ENCODE measurements at regions of chr19 and their contacts with region 1.

Region 1: GRCh38 chr19:18007044-18007916 is 690 bp upstream of the ARRDC2 start:
- DNase-seq: peak; percentile 73 to 87 (median 74)
- H3K4me3 ChIP-seq: peak overlapping the region; percentile 70
- H3K4me3 Mint-ChIP-seq: peak overlapping the region; percentile 84 to 94 (median 88)
- H3K27ac ChIP-seq: peak overlapping the region; percentile 38
- H3K27ac Mint-ChIP-seq: peak overlapping the region; percentile 90 to 99 (median 97)
- H3K4me1 ChIP-seq: peaks cover 43% of the 10 kb centered on the region
- H3K4me1 Mint-ChIP-seq: peaks cover 17 to 39% (median 35%) of the 10 kb centered on the region in 3 donors
- H3K27me3 ChIP-seq: no peaks in the 10 kb centered on the region
- H3K27me3 Mint-ChIP-seq: peaks cover 0 to 2% of the 10 kb centered on the region in 2 donors

Region 2: DNA sequence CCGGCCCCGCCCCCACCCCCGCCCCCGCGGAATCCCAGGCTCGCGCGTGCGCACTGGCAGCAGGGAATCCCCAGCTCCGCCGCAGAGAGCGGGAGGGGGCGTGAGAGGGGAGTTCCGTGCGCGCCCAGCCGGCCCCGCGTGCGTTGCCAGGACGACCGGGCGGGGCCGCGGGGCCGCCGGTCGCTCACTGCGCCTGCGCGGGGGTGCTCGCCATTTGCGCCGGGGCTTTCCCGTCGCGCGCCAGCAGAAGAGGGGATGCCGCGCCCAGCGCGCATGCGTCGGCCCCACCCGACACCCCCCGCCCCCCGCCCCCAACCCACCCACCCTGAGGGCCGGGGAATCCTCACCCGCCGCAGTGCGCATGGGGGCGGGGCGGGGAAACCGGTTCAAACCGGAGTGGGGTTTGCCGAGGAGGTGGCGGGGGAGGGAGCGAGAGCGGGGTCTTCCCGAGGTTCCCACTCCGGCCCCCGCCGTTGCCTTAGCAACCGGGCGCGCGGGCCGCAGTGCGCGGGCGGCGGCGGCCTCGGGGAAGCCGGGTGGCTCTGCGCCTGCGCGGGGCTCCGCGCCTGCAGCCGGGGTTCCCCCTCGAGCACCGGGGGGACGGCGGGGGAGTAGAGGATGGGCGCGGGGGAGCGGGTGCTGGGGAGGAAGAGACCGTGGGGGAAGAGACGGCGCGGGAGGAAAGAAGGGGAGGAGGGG is 59.3 kb before region 1 on chr19:
- CTCF ChIA-PET with region 1: no interaction called
- POLR2A ChIA-PET with region 1: no interaction called
- DNase-seq: peak; percentile 93 to 97 (median 95)
- H3K4me3 ChIP-seq: no peak overlapping the region
- H3K4me3 Mint-ChIP-seq: peak overlapping the region; percentile 66 to 92 (median 82)
- H3K27ac ChIP-seq: peak overlapping the region; percentile 51
- H3K27ac Mint-ChIP-seq: peak overlapping the region in 6 of 8 donors; percentile 21 to 100 (median 92)
- H3K4me1 ChIP-seq: peaks cover 50% of the 10 kb centered on the region
- H3K4me1 Mint-ChIP-seq: peaks cover 41 to 54% (median 47%) of the 10 kb centered on the region in 3 donors
- H3K27me3 ChIP-seq: peaks cover 33% of the 10 kb centered on the region
- H3K27me3 Mint-ChIP-seq: peaks cover 30 to 36% of the 10 kb centered on the region in 2 donors

Region 3: GRCh38 chr19:17985037-17985818 is 22.1 kb before region 1 on chr19:
- CTCF ChIA-PET with region 1: no interaction called
- POLR2A ChIA-PET with region 1: no interaction called
- DNase-seq: no peak
- H3K4me3 ChIP-seq: no peak overlapping the region
- H3K4me3 Mint-ChIP-seq: no peak overlapping the region
- H3K27ac ChIP-seq: no peak overlapping the region
- H3K27ac Mint-ChIP-seq: no peak overlapping the region
- H3K4me1 ChIP-seq: no peaks in the 10 kb centered on the region
- H3K4me1 Mint-ChIP-seq: no peaks in the 10 kb centered on the region
- H3K27me3 ChIP-seq: no peaks in the 10 kb centered on the region
- H3K27me3 Mint-ChIP-seq: peaks cover 11 to 15% of the 10 kb centered on the region in 2 donors

Region 4: DNA sequence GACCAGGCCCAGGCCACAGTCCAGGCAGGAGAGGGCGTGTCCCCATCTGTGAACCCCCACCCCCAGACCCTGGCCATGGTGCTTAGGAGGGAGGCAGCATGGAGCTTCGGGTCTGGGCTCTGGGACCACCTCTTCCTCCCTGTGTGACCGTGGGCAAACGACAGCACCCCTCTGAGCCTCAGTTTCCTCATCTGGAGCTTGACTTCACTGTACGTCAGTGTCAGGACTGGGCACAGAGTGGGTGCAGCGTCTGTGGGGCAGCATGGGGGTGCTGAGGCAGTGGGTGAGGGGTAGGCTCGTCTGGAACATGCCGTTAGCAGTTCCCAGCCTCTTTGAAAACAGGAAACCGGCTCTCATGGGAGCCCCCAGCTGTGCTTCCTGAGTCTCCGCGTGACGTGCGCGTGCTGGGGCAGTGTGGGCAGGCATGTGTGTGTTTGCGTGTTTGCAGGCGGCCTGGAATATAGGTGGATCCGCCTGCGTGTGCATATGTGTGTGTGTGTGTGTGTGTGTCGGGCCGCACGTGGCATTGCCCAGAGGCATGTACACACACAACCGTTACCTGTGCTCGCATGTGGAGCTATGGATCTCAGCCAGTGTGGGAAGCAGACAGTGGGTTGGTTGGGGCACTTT is 16.5 kb after region 1 on chr19:
- CTCF ChIA-PET with region 1: interaction called, 14 read pairs
- POLR2A ChIA-PET with region 1: interaction called, 9 read pairs
- DNase-seq: peak; percentile 31 to 93 (median 67)
- H3K4me3 ChIP-seq: peak overlapping the region; percentile 43
- H3K4me3 Mint-ChIP-seq: peak overlapping the region in 6 of 7 donors; percentile 34 to 72 (median 59)
- H3K27ac ChIP-seq: no peak overlapping the region
- H3K27ac Mint-ChIP-seq: peak overlapping the region; percentile 65 to 93 (median 90)
- H3K4me1 ChIP-seq: peaks cover 40% of the 10 kb centered on the region
- H3K4me1 Mint-ChIP-seq: peaks cover 38 to 53% (median 43%) of the 10 kb centered on the region in 3 donors
- H3K27me3 ChIP-seq: no peaks in the 10 kb centered on the region
- H3K27me3 Mint-ChIP-seq: peaks cover 0 to 1% of the 10 kb centered on the region in 2 donors

Region 5: DNA sequence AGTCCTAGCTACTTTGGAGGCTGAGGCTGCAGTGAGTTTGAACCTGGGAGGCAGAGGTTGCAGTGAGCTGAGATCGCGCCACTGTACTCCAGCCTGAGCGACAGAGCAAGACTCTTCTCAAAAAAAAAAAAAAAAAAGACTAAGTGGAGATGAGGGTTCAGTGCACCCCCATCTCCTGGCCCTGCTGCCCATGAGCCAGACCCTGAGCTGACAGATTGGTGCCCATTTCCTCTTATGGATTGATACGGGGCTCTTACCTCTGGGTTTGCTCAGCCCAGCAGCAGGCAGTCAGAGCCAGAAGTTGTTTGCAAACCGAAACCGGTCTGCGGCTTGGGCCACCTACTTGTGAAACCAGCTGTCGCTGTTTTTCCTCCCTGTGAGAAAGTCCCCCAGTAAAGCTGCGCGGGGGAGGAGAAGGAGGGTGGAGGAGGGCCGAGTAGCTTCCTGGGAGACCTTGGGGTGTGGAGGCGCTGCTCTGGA is 37.6 kb after region 1 on chr19:
- CTCF ChIA-PET with region 1: interaction called, 17 read pairs
- POLR2A ChIA-PET with region 1: interaction called, 18 read pairs
- DNase-seq: peak; percentile 71 to 91 (median 81)
- H3K4me3 ChIP-seq: peak overlapping the region; percentile 68
- H3K4me3 Mint-ChIP-seq: peak overlapping the region; percentile 13 to 91 (median 84)
- H3K27ac ChIP-seq: peak overlapping the region; percentile 64
- H3K27ac Mint-ChIP-seq: peak overlapping the region; percentile 84 to 97 (median 93)
- H3K4me1 ChIP-seq: peaks cover 35% of the 10 kb centered on the region
- H3K4me1 Mint-ChIP-seq: peaks cover 31 to 47% (median 44%) of the 10 kb centered on the region in 3 donors
- H3K27me3 ChIP-seq: no peaks in the 10 kb centered on the region
- H3K27me3 Mint-ChIP-seq: no peaks in the 10 kb centered on the region

Region 6: GRCh38 chr19:18109733-18110595 is 102.7 kb after region 1 on chr19:
- CTCF ChIA-PET with region 1: interaction called, 13 read pairs
- POLR2A ChIA-PET with region 1: interaction called, 3 read pairs
- DNase-seq: peak; percentile 31 to 68 (median 46)
- H3K4me3 ChIP-seq: peak overlapping the region; percentile 61
- H3K4me3 Mint-ChIP-seq: peak overlapping the region; percentile 73 to 93 (median 86)
- H3K27ac ChIP-seq: peak overlapping the region; percentile 51
- H3K27ac Mint-ChIP-seq: peak overlapping the region in 5 of 8 donors; percentile 59 to 92 (median 89)
- H3K4me1 ChIP-seq: peaks cover 13% of the 10 kb centered on the region
- H3K4me1 Mint-ChIP-seq: peaks cover 16 to 30% (median 18%) of the 10 kb centered on the region in 3 donors
- H3K27me3 ChIP-seq: no peaks in the 10 kb centered on the region
- H3K27me3 Mint-ChIP-seq: no peaks in the 10 kb centered on the region

Region 7: DNA sequence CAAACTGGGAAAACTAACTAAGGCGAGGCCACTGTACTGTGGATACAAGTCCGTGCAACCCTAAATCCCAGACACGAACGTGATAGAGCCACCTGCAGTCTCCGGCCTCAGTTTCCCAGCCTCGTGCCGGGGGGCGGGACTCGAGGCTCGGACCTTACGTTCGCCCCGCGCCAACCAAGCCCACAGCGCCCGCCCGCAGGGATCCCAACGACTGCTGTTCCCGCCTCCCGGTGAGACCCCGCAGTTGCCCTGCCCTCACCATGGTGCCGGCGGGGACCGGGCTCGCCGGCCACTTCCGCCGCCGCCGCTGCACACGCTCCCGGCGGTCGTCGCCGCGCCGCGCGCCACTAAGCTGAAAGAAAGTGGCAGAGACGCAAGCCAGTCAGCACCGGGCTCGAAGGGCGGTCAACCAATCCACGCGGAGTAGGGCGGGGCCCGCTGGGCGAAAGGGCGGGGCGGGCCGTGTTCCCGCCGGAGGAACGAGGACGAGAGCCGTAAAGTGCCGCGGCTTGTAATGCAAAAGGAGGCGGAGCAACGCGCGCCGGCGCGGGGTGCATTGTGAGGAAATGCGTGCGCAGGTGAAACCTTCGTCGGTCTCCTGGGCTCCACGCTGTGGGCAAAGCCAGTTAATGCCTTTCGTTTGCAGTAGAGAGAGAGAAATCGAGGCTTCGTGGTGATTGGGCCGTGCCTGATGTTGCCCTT is 315.6 kb after region 1 on chr19 and contains the start of gene LSM4:
- CTCF ChIA-PET with region 1: no interaction called
- POLR2A ChIA-PET with region 1: no interaction called
- DNase-seq: peak; percentile 99 to 100 (median 99)
- H3K4me3 ChIP-seq: peak within 1 kb of the TSS; percentile 88
- H3K4me3 Mint-ChIP-seq: peak within 1 kb of the TSS; percentile 78 to 91 (median 83)
- H3K27ac ChIP-seq: peak within 1 kb of the TSS; percentile 91
- H3K27ac Mint-ChIP-seq: peak within 1 kb of the TSS; percentile 89 to 98 (median 98)
- H3K4me1 ChIP-seq: peaks cover 57% of the 10 kb centered on the region
- H3K4me1 Mint-ChIP-seq: peaks cover 45 to 58% (median 53%) of the 10 kb centered on the region in 3 donors
- H3K27me3 ChIP-seq: no peaks in the 10 kb centered on the region
- H3K27me3 Mint-ChIP-seq: no peaks in the 10 kb centered on the region
- total RNA-seq, gene LSM4: 351 to 373 TPM

Measured in CD8-positive, alpha-beta memory T cell (primary cell).